Activated CD8-positive, alpha-beta memory T cell treated with anti-CD3 and anti-CD28 coated beads, Interleukin-2, amount 10 ng/mL, durations not matched to agents 7 days and 5 days (primary cell): ENCODE measurements at regions of chr1 and their contacts with region 1.

Region 1: GRCh38 chr1:165697881-165698760 is at the start of gene ALDH9A1:
- DNase-seq: peak; percentile 93
- ATAC-seq: peak; percentile 93
- H3K4me3 Mint-ChIP-seq: peak within 1 kb of the TSS; percentile 90
- H3K27ac Mint-ChIP-seq: peak within 1 kb of the TSS; percentile 96
- H3K4me1 Mint-ChIP-seq: peaks cover 24% of the 10 kb centered on the region
- H3K27me3 Mint-ChIP-seq: no peaks in the 10 kb centered on the region
- total RNA-seq, gene ALDH9A1: 43.9 to 45.2 TPM

Region 2: DNA sequence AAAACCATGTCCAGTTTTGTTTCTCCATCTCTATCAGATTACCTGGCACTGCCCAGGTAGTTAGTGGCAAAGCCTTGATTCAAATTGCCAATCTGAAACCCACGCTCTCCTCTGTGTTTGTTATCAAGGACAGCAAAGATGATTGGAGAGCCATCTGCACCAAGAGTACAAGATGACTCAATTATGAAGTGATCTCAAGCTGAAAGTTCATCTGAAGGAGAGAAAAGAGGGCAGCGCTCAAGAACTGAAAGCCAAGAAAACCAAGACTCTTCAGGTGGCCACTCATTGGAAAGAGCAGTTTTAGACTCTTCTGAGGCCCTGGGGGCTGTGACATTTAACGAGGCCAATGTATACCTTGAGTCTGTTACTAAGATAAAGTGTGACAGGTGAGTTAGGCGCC is 267.0 kb before region 1 on chr1:
- CTCF ChIA-PET with region 1: no interaction called
- DNase-seq: no peak
- ATAC-seq: peak; percentile 36
- H3K4me3 Mint-ChIP-seq: no peak overlapping the region
- H3K27ac Mint-ChIP-seq: no peak overlapping the region
- H3K4me1 Mint-ChIP-seq: peaks cover 10% of the 10 kb centered on the region
- H3K27me3 Mint-ChIP-seq: peaks cover 8% of the 10 kb centered on the region

Region 3: DNA sequence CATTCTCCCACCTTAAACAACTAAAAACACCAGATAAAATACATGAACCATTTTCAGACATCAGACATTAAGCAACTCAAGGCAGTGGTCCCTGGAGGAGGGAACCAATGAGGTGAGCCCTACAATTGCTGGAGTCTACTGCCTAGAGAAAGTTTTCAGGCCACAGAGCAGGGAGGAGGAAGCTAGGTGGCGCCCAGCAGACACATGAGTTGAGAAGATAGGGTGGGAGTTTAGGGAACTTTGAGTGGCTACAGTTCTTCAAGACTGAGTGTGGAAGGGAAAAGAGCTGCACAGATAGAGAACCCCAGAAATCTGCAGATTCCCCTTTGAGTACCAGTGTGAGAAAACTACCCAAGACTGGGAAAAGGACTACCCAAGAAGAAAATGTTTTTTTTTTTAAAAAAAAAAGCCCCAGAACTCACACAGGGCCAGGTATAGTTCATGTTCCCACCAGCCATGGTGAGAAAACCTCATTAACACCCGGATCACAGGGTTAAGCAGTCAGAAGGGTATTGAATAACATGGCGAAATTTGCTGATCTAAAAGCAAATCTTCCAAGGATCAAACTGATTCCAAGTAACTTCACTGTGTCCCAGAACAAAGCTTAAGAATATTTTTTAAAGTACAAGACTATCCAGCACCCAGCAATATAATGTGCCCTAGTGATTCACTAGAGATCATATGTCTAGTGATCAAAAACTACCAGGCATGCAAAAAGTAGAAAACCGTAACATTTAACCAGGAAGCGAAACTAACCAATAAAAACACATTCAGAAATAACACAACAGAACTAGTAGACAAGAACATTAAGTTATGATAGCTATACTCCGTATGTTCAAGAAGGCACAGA is 11.8 kb before region 1 on chr1:
- CTCF ChIA-PET with region 1: interaction called, 12 read pairs
- DNase-seq: no peak
- ATAC-seq: no peak
- H3K4me3 Mint-ChIP-seq: no peak overlapping the region
- H3K27ac Mint-ChIP-seq: peak overlapping the region; percentile 20
- H3K4me1 Mint-ChIP-seq: peaks cover 28% of the 10 kb centered on the region
- H3K27me3 Mint-ChIP-seq: no peaks in the 10 kb centered on the region

Region 4: DNA sequence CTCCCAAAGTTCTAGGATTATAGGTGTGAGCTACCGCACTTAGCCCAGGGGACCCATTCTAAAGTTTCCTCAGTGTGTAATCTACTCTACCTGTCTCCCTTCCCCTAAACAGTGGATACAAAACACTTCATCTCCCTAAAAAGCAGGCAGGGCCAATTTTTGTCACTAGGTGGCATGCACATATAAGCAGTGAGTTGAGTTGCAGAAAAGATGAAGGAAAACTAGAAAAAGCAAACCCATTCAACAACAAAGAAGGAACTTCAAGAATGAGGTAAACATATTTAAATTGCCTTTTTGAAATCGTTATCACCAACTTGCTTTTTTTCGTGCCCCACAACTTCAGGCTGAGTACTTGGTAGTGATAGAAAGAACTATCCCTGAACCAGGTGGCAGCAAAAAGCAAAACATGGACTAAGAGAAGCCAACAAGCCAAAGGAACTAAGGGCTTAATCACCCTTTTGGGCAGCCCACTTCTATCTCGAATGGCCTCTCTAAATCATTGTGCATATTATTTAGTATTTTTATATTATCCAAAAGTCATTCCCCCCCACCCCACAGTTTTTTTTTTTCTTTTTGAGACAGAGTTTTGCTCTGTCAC is 19.9 kb after region 1 on chr1:
- CTCF ChIA-PET with region 1: no interaction called
- DNase-seq: peak; percentile 57
- ATAC-seq: no peak
- H3K4me3 Mint-ChIP-seq: no peak overlapping the region
- H3K27ac Mint-ChIP-seq: no peak overlapping the region
- H3K4me1 Mint-ChIP-seq: no peaks in the 10 kb centered on the region
- H3K27me3 Mint-ChIP-seq: peaks cover 7% of the 10 kb centered on the region